Mammary epithelial cell (primary cell): ENCODE measurements at regions of chr7 and their contacts with region 1.

Region 1: DNA sequence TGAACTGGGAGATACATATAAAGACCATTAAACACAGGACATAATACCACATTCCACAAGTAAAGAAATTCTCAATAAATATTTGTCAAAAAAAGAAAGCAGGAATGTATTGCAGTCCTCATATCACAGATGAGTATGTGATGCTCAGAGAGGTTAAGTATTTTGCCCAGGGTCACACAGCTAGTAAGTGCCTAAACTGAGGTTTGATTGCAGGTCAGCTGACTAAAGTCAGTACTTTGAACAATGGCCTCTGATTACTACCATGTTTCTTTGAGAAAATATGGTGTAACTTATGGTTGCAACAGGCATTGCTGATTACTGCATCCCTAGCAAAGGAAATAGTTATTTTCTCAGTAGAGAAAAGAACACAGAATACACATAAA is 267.1 kb downstream of the ELMO1 start:
- DNase-seq: no peak
- H3K4me3 ChIP-seq: no peak overlapping the region
- H3K27ac ChIP-seq: no peak overlapping the region
- H3K4me1 ChIP-seq: no peaks in the 10 kb centered on the region
- H3K27me3 ChIP-seq: no peaks in the 10 kb centered on the region
- CTCF ChIP-seq: no peak

Region 2: DNA sequence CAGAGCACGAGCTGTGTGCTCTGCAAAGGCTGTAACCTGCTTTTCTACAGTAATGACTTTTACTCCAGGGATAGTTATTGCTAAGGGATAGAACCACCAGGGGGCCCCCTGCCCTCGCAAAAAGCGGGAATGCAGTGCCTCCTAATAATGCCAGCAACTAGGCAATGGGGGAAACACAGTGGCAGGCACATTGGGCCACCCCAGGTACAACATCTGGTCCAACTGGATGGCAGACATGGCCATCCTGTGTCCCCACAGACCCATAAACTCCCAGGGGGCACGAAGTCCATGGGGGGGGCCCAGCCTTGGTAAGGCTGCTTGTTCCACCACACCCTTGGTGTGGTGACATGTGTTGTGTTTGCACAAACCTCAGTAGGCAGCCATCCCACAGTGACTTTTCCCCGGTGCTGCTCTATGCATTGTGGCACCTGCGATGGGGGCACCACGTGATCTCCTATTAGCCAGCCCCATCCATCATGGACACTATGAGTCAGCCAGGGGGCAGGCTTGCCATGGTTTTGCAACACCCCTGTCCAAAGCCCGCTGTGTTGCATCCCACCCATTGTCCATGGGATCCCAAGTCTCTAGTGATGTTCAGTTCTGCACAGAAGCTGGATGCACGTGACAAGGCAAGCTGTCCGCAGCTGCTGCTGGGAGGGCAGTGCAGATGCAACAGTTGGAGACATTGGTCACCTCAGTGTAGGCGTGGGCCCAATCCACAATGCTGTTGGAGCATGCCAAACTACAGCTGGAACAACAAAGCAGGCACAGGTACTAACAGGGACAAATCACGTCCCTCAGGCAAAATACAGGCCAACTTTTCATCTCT is 707.9 kb before region 1 on chr7:
- CTCF ChIA-PET with region 1: interaction called, 8 read pairs
- dilution Hi-C with region 1: no loop called
- in situ Hi-C with region 1: no loop called
- intact Hi-C with region 1: loop called (anchors 1 kb)
- DNase-seq: peak; percentile 93
- H3K4me3 ChIP-seq: no peak overlapping the region
- H3K27ac ChIP-seq: peak overlapping the region; percentile 68
- H3K4me1 ChIP-seq: peaks cover 31% of the 10 kb centered on the region
- H3K27me3 ChIP-seq: no peaks in the 10 kb centered on the region
- CTCF ChIP-seq: peak; percentile 38 to 52

Region 3: GRCh38 chr7:36670585-36671431 is 510.7 kb before region 1 on chr7:
- CTCF ChIA-PET with region 1: no interaction called
- dilution Hi-C with region 1: no loop called
- in situ Hi-C with region 1: loop called (anchors 10 kb)
- intact Hi-C with region 1: no loop called
- DNase-seq: peak; percentile 76
- H3K4me3 ChIP-seq: no peak overlapping the region
- H3K27ac ChIP-seq: no peak overlapping the region
- H3K4me1 ChIP-seq: peaks cover 29% of the 10 kb centered on the region
- H3K27me3 ChIP-seq: no peaks in the 10 kb centered on the region
- CTCF ChIP-seq: peak; percentile 94 to 96

Region 4: GRCh38 chr7:36827726-36828703 is 353.5 kb before region 1 on chr7:
- CTCF ChIA-PET with region 1: no interaction called
- dilution Hi-C with region 1: no loop called
- in situ Hi-C with region 1: no loop called
- intact Hi-C with region 1: loop called (anchors 5 kb)
- DNase-seq: peak; percentile 81
- H3K4me3 ChIP-seq: no peak overlapping the region
- H3K27ac ChIP-seq: no peak overlapping the region
- H3K4me1 ChIP-seq: peaks cover 8% of the 10 kb centered on the region
- H3K27me3 ChIP-seq: no peaks in the 10 kb centered on the region
- CTCF ChIP-seq: no peak

Region 5: GRCh38 chr7:36986429-36987362 is 194.8 kb before region 1 on chr7:
- CTCF ChIA-PET with region 1: interaction called, 5 read pairs
- dilution Hi-C with region 1: no loop called
- in situ Hi-C with region 1: loop called (anchors 10 to 25 kb)
- intact Hi-C with region 1: loop called (anchors 1 kb)
- DNase-seq: peak; percentile 41
- H3K4me3 ChIP-seq: no peak overlapping the region
- H3K27ac ChIP-seq: no peak overlapping the region
- H3K4me1 ChIP-seq: no peaks in the 10 kb centered on the region
- H3K27me3 ChIP-seq: no peaks in the 10 kb centered on the region
- CTCF ChIP-seq: peak; percentile 94 to 97

Region 6: GRCh38 chr7:37097276-37097675 is 84.3 kb before region 1 on chr7:
- CTCF ChIA-PET with region 1: interaction called, 15 read pairs
- dilution Hi-C with region 1: no loop called
- in situ Hi-C with region 1: no loop called
- intact Hi-C with region 1: no loop called
- DNase-seq: no peak
- H3K4me3 ChIP-seq: no peak overlapping the region
- H3K27ac ChIP-seq: no peak overlapping the region
- H3K4me1 ChIP-seq: no peaks in the 10 kb centered on the region
- H3K27me3 ChIP-seq: no peaks in the 10 kb centered on the region
- CTCF ChIP-seq: no peak